ENCODE measurements at regions of chr16 and their contacts with region 1.

Region 1: GRCh38 chr16:2500918-2501750 is 12.6 kb upstream of the ATP6V0C start:
- DNase-seq: peak; percentile 85 to 87
- ATAC-seq: peak; percentile 81 to 93 (median 86)
- H3K4me3 ChIP-seq: peak overlapping the region in 5 of 10 donors; percentile 37 to 46 (median 40)
- H3K27ac ChIP-seq: peak overlapping the region in 4 of 10 donors; percentile 9 to 52 (median 26)
- H3K4me1 ChIP-seq: peaks cover 28 to 58% (median 46%) of the 10 kb centered on the region in 9 donors
- H3K27me3 ChIP-seq: no peaks in the 10 kb centered on the region
- CTCF ChIP-seq: peak; percentile 93 to 99 (median 99)

Region 2: DNA sequence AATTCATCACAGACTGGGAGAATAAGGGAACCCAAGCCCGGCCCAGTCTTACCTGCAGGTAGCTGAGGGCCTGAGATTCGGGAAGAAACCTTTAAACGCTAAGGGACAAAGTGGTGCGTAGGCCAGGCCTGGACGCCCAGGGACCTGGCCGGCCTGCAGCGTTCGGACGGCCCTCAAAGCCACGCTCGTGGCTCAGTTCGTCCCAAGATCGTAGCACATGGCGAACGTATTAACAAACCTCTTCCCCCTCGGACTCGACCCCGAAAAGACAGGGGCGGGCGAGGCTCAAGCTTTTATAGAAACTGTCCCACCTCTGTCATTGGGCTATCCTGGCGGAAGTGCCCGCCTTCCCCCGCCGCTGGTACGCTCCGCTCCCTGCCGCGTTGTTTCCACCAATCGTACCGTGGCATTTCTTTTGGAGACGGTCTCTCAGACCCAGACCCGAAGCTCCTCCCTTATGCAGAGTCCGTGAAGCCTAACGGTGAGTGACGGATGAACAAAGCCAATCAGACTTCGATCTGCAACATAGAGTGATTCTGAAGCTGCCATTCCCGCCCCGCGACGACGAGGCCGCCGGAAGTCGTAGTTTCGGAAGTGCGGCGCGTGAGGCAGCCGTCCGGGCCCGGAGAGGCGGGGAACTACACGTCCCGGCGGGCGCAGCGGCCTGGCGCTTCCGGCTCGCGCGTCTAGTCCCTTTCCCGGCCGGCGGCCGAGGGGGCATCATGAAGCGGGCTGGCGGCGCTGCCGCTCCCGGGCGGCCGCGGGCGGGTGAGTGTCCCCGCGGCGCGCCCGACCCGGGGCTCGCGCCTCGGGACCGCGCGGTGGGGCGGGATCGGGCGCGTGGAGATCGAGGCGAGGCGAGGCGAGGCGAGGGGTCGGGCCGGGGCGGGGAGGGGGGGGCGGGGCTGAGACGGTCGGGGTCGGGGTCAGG is 345.8 kb before region 1 on chr16 and contains the start of gene TRAF7:
- intact Hi-C with region 1: loop called in 1 of 10 experiments (anchors 10 kb)
- DNase-seq: peak; percentile 98 to 100
- ATAC-seq: peak; percentile 90 to 96 (median 94)
- H3K4me3 ChIP-seq: peak within 1 kb of the TSS; percentile 53 to 92 (median 80)
- H3K27ac ChIP-seq: peak within 1 kb of the TSS in 9 of 10 donors; percentile 64 to 89 (median 86)
- H3K4me1 ChIP-seq: peaks cover 39 to 89% (median 77%) of the 10 kb centered on the region in 9 donors
- H3K27me3 ChIP-seq: no peaks in the 10 kb centered on the region
- CTCF ChIP-seq: no peak
- total RNA-seq, gene TRAF7: 16.9 to 44.9 (median 23.8) TPM

Region 3: GRCh38 chr16:2251483-2252240 is 249.5 kb before region 1 on chr16 and contains the start of gene ECI1:
- intact Hi-C with region 1: loop called in 1 of 10 experiments (anchors 5 kb)
- DNase-seq: peak; percentile 96 to 99
- ATAC-seq: peak; percentile 96 to 99 (median 98)
- H3K4me3 ChIP-seq: peak within 1 kb of the TSS; percentile 46 to 99 (median 76)
- H3K27ac ChIP-seq: peak within 1 kb of the TSS; percentile 82 to 98 (median 94)
- H3K4me1 ChIP-seq: peaks cover 7 to 28% (median 18%) of the 10 kb centered on the region in 9 donors
- H3K27me3 ChIP-seq: no peaks in the 10 kb centered on the region
- CTCF ChIP-seq: peak; percentile 57 to 94 (median 79)
- total RNA-seq, gene ECI1: 118 to 243 (median 153) TPM

Region 4: GRCh38 chr16:2429034-2429770 is 71.9 kb before region 1 on chr16 and contains the start of gene CCNF:
- intact Hi-C with region 1: loop called in 8 of 10 experiments (anchors 5 to 10 kb)
- DNase-seq: peak; percentile 97 to 99
- ATAC-seq: peak; percentile 97 to 99 (median 99)
- H3K4me3 ChIP-seq: peak within 1 kb of the TSS; percentile 41 to 98 (median 84)
- H3K27ac ChIP-seq: peak within 1 kb of the TSS in 9 of 10 donors; percentile 50 to 89 (median 77)
- H3K4me1 ChIP-seq: peaks cover 6 to 22% (median 19%) of the 10 kb centered on the region in 9 donors
- H3K27me3 ChIP-seq: no peaks in the 10 kb centered on the region
- CTCF ChIP-seq: peak in 3 of 9 donors; percentile 12 to 32 (median 22)
- total RNA-seq, gene CCNF: 0.62 to 3.4 (median 1.1) TPM

Region 5: DNA sequence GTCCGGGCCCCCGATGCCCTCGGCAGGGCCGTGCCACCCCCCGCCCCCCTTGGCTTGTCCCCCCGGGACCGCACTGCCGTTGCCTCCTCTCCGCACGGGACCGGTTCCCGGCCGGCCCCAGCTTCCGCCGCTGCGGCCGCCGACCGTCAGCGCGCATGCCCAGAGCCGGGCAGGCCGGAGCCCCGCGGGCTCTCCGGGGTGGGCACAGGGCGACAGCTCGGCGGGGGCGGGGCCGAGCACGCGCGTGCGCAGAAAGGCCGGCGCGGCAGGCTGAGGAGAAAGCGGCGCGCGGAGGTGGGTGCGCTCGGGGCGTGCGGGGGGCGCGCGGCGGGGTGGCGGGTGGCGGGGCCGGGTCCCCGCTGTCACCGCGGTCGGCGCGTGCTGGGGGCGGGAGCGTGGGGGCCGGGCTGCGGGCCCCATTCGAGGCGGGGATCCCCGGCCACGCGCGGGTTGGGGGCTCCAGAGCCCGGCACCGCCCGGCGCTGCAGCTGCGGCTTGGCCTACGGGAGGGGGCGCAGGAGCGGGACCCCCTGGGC is 26.2 kb before region 1 on chr16 and contains the start of gene TBC1D24:
- intact Hi-C with region 1: loop called in 1 of 10 experiments (anchors 2 kb)
- DNase-seq: peak; percentile 84 to 92
- ATAC-seq: peak; percentile 89 to 96 (median 93)
- H3K4me3 ChIP-seq: peak within 1 kb of the TSS; percentile 64 to 89 (median 76)
- H3K27ac ChIP-seq: peak within 1 kb of the TSS; percentile 37 to 94 (median 88)
- H3K4me1 ChIP-seq: peaks cover 22 to 46% (median 38%) of the 10 kb centered on the region in 9 donors
- H3K27me3 ChIP-seq: peaks cover 11 to 37% (median 36%) of the 10 kb centered on the region in 7 donors
- CTCF ChIP-seq: no peak
- total RNA-seq, gene TBC1D24: 6.2 to 14.9 (median 9.2) TPM

Region 6: DNA sequence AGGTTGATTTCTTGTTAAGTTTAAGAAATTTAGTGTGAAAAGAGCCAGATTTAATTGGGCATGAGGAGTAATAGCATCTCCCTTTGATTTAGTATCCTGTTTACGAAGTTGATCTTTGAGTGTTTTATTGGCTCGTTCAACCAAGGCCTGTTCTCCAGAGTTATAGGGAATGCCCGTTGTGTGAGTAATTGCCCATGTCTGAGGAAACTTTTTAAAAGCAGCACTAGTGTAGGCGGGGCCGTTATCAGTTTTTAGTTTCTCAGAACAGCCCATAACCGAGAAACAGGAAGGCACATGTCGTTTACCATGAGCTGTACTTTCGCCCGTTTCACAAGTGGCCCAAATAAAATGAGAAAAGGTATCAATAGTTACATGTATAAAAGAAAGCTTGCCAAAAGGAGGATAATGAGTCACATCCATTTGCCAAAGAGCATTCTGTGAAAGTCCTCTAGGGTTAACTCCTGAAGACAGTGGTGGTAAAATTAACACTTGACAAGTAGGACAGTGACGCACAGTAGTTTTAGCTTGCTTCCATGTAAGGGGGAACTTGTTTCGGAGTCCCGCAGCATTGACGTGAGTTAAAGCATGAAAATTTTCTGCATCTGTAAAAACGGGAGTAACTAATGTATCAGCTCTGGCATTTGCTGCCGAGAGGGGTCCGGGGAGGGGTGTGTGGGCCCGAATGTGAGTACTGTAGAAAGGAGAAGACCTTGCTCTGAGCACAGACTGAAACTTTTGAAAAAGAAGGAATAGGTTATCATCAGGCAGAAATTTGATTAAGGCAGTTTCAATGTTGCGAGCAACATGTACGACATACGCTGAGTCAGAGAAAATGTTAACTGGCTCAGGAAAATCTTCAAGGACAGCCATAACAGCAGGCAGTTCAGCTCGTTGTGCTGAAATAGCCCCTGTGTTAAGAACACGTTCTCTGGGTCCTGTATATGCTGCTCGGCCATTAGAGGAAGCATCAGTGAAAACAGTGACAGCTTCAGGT is 162.7 kb after region 1 on chr16:
- intact Hi-C with region 1: no loop called
- DNase-seq: no peak
- ATAC-seq: peak in 1 of 8 donors; percentile 66
- H3K4me3 ChIP-seq: no peak overlapping the region
- H3K27ac ChIP-seq: peak overlapping the region in 2 of 10 donors; percentile 40 to 58
- H3K4me1 ChIP-seq: peaks cover 0 to 10% (median 0%) of the 10 kb centered on the region in 9 donors
- H3K27me3 ChIP-seq: no peaks in the 10 kb centered on the region
- CTCF ChIP-seq: no peak

Measured in heart right ventricle (tissue), 16 donors.